ENCODE measurements at regions of chr14 and their contacts with region 1.

Region 1: DNA sequence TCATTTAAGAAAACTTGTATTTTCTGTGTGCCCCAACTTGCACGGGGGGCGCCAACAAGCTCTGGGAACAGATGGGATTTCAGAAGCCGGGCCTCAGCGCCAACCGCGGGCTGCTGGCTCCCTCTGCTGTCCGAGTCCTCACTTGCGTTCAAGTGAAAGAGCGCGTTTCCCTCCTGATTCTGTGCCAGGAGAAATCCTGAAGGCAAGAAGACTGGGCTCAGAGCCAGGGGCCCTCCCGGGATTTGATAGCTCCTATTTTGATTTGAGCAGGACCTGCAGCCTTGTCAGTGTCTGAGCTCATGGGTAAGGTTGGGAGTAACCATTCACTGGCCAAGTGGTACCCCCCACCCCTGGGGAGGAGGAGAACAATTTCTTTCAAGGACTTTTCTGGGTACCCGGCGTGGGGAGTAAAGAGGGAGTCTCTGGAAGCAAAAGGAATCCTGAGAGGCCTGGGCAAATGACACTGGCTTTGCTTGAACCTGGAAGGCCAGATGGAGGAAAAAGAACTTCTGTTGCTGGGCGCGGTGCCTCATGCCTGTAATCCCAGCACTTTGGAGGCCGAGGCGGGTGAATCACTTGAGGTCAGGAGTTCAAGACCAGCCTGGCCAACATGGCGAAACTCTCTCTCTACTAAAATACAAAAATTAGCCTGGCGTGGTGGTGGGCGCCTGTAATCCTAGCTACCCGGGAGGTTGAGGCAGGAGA is 179.0 kb upstream of the RGS6 start:
- DNase-seq: peak; percentile 91 to 98 (median 97)
- H3K4me3 ChIP-seq: no peak overlapping the region
- H3K27ac ChIP-seq: peak overlapping the region in 3 of 5 donors; percentile 55 to 71 (median 66)
- H3K4me1 ChIP-seq: peaks cover 4 to 10% of the 10 kb centered on the region in 2 donors
- H3K27me3 ChIP-seq: no peaks in the 10 kb centered on the region
- CTCF ChIP-seq: peak; percentile 75 to 98 (median 94)
- POLR2A ChIP-seq: no peak

Region 2: DNA sequence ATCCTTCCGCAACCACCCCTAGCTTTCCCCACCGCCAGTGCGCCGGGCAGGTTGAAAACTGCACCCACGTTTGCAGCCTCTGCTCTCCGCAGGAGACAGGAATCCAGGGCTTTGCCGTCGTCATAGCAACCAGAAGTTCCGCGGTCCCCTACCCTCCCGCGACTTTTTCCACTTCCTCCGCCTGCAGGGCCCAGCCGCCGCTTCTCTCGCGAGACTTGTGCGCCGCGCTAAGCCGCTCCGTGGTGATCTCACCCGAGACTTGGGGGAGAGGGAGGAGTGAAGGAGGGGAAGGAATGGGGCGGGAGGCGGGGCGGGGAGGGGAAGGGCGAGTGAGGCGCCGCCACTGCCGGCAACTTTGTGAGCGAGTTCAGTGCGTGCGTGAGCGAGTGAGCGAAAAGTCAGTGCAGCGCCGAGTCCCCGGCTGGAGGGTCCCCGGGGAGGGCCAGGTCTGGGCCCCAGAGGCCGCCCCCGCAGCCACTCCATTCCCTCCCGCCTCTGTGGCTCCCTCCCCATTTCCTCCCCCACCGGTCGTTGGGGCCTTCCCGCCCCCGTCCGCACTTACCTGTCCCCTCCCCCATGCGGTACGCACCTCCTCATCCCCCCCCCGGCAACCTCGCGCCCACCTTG is 433.1 kb before region 1 on chr14:
- intact Hi-C with region 1: loop called in 1 of 2 experiments (anchors 10 kb)
- DNase-seq: peak; percentile 98 to 99 (median 99)
- H3K4me3 ChIP-seq: peak within 1 kb of the TSS; percentile 59 to 96 (median 74)
- H3K27ac ChIP-seq: peak within 1 kb of the TSS; percentile 92 to 97 (median 96)
- H3K4me1 ChIP-seq: peaks cover 13 to 39% of the 10 kb centered on the region in 2 donors
- H3K27me3 ChIP-seq: no peaks in the 10 kb centered on the region
- CTCF ChIP-seq: peak in 1 of 6 experiments; percentile 29
- POLR2A ChIP-seq: peak; percentile 88 to 90

Region 3: DNA sequence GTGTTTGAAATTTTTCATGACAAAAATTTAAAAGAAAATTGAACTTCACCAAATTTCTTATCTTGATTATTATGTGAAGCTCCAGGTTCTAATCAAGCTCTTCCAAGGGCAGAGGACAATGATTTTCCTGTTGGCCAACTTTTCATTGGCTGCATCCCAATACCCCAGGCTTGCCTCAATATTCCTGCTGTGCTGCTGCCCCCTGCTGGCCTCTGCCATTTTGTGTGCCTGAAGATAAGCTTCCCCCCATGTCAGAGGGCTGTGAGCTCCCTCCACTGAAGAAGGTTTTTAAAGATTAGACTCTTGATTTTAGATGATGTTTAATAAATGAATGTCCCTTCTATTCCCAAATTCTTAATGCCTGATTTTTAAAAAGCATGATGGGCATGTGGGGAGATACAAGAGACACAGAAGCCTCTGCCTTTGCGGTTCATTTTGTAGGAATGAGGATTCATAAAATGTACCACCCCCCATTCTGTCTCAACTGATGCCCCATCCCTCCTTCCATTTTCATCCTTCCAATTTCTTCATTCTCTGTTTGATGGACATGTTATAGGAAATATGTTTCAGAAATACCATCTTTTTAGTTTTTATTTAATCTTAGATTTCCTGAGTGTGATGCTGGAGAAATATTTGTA is 102.2 kb after region 1 on chr14:
- intact Hi-C with region 1: loop called in 1 of 2 experiments (anchors 10 kb)
- DNase-seq: peak; percentile 81 to 94 (median 92)
- H3K4me3 ChIP-seq: no peak overlapping the region
- H3K27ac ChIP-seq: no peak overlapping the region
- H3K4me1 ChIP-seq: no peaks in the 10 kb centered on the region
- H3K27me3 ChIP-seq: no peaks in the 10 kb centered on the region
- CTCF ChIP-seq: peak; percentile 71 to 84 (median 73)
- POLR2A ChIP-seq: no peak

Region 4: GRCh38 chr14:72237556-72238355 is 484.5 kb after region 1 on chr14:
- intact Hi-C with region 1: no loop called
- DNase-seq: no peak
- H3K4me3 ChIP-seq: no peak overlapping the region
- H3K27ac ChIP-seq: no peak overlapping the region
- H3K4me1 ChIP-seq: no peaks in the 10 kb centered on the region
- H3K27me3 ChIP-seq: no peaks in the 10 kb centered on the region
- CTCF ChIP-seq: no peak
- POLR2A ChIP-seq: no peak